ENCODE measurements at regions of chr18 and their contacts with region 1.

Region 1: DNA sequence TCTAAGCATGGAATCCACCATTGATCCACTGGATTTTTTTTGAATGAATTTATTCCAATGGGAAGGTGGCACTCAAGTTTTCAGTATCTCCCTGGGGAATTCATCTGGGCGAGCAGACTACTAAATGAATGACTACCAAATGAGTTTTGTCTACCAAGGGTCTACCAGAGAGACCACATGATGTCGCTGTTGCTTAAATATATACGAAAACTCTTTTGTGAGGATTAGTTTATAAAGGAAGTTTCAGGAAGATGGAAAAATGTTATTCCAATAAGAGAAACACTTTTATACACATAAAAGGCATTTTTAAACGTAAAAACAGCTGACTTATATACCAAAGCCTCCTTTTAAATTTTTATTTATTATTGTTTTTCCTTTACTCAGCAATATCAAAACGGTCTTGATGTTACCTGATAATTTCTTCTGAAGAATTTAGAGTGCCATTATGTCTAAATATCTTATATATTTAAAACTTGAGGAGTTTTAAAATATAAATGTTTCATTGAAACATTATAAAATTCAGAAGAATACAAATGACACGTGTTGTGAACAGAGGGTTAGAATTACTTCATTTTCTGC is 139.7 kb downstream of the HRH4 start:
- DNase-seq: peak in 1 of 2 experiments; percentile 21
- H3K4me3 ChIP-seq: no peak overlapping the region
- H3K4me3 Mint-ChIP-seq: no peak overlapping the region
- H3K27ac Mint-ChIP-seq: no peak overlapping the region
- H3K4me1 ChIP-seq: no peaks in the 10 kb centered on the region
- H3K4me1 Mint-ChIP-seq: no peaks in the 10 kb centered on the region
- H3K27me3 ChIP-seq: no peaks in the 10 kb centered on the region
- H3K27me3 Mint-ChIP-seq: peaks cover 5% of the 10 kb centered on the region
- CTCF ChIP-seq: peak; percentile 29 to 30

Region 2: DNA sequence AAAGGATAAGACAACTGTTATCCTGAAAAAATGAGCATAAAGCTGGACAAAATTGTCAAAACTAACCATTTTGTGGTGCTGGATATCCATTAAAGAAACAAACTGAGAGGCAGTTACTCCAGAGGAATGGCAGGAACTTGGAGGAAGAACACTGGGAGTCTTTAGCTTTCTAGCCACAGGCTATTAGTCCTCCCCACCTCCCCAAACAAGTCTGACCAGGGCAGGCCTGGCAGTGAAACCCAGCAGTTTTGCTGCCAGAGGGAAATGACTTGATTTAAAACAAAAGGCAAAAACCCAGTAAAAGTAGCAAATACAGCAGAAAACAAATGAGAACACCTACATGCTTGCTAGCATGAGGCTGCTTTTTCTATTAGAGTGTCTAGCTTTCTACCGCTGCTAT is 237.4 kb before region 1 on chr18:
- CTCF ChIA-PET with region 1: no interaction called
- POLR2A ChIA-PET with region 1: no interaction called
- intact Hi-C with region 1: no loop called
- DNase-seq: peak; percentile 13 to 38
- H3K4me3 ChIP-seq: no peak overlapping the region
- H3K4me3 Mint-ChIP-seq: no peak overlapping the region
- H3K27ac Mint-ChIP-seq: no peak overlapping the region
- H3K4me1 ChIP-seq: 0 out of 2 replicates have a peak, but pooled peaks cover 5% of the 10 kb centered on the region
- H3K4me1 Mint-ChIP-seq: no peaks in the 10 kb centered on the region
- H3K27me3 ChIP-seq: no peaks in the 10 kb centered on the region
- H3K27me3 Mint-ChIP-seq: no peaks in the 10 kb centered on the region
- CTCF ChIP-seq: no peak

Region 3: GRCh38 chr18:24543805-24544498 is 56.2 kb before region 1 on chr18:
- CTCF ChIA-PET with region 1: no interaction called
- POLR2A ChIA-PET with region 1: no interaction called
- intact Hi-C with region 1: loop called (anchors 2 kb)
- DNase-seq: peak in 1 of 2 experiments; percentile 23
- H3K4me3 ChIP-seq: no peak overlapping the region
- H3K4me3 Mint-ChIP-seq: no peak overlapping the region
- H3K27ac Mint-ChIP-seq: no peak overlapping the region
- H3K4me1 ChIP-seq: no peaks in the 10 kb centered on the region
- H3K4me1 Mint-ChIP-seq: no peaks in the 10 kb centered on the region
- H3K27me3 ChIP-seq: no peaks in the 10 kb centered on the region
- H3K27me3 Mint-ChIP-seq: no peaks in the 10 kb centered on the region
- CTCF ChIP-seq: peak; percentile 20 to 41

Region 4: DNA sequence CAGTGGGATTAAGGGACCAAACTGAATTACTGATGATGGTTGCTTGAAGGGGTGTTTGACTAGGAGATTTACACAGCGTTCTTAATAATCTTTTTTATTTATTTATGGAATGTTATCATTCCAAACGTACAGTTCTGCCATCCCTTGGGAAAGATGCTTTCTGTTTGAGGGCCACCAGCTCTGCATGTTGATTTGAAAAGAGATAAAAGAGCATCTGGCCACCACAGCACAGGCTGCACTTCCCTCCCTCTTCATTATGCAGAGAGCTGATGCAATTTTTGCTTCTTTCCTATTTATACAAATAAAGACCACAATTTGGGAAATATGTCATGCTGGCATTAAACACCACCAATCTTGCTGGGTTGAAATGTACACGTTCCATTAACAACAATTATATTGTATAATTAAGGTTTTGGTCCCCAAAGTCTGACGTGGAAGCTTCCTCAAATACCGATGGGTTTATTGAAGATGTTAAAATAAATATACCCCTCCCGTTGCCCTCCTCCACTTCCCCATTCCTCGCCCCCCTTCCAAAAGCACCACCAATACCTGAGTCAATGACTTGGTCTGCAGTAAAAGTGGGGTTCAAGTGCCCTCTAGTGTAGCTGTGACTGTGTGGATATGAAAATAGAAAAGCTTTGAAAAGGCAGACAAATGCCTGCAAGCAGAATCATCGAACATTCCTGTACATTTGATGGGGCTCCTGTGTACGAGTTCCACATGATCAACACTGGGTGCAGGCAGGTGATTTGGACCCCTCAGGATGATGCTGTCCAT is 72.2 kb after region 1 on chr18:
- CTCF ChIA-PET with region 1: no interaction called
- POLR2A ChIA-PET with region 1: no interaction called
- intact Hi-C with region 1: loop called (anchors 5 kb)
- DNase-seq: no peak
- H3K4me3 ChIP-seq: no peak overlapping the region
- H3K4me3 Mint-ChIP-seq: no peak overlapping the region
- H3K27ac Mint-ChIP-seq: no peak overlapping the region
- H3K4me1 ChIP-seq: no peaks in the 10 kb centered on the region
- H3K4me1 Mint-ChIP-seq: no peaks in the 10 kb centered on the region
- H3K27me3 ChIP-seq: no peaks in the 10 kb centered on the region
- H3K27me3 Mint-ChIP-seq: peaks cover 6% of the 10 kb centered on the region
- CTCF ChIP-seq: no peak

Region 5: GRCh38 chr18:24726727-24727492 is 126.7 kb after region 1 on chr18:
- CTCF ChIA-PET with region 1: interaction called, 3 read pairs
- POLR2A ChIA-PET with region 1: no interaction called
- intact Hi-C with region 1: loop called (anchors 1 kb)
- DNase-seq: peak; percentile 35 to 56
- H3K4me3 ChIP-seq: no peak overlapping the region
- H3K4me3 Mint-ChIP-seq: peak overlapping the region; percentile 69
- H3K27ac Mint-ChIP-seq: no peak overlapping the region
- H3K4me1 ChIP-seq: no peaks in the 10 kb centered on the region
- H3K4me1 Mint-ChIP-seq: peaks cover 6% of the 10 kb centered on the region
- H3K27me3 ChIP-seq: no peaks in the 10 kb centered on the region
- H3K27me3 Mint-ChIP-seq: peaks cover 6% of the 10 kb centered on the region
- CTCF ChIP-seq: peak; percentile 45 to 68

Region 6: DNA sequence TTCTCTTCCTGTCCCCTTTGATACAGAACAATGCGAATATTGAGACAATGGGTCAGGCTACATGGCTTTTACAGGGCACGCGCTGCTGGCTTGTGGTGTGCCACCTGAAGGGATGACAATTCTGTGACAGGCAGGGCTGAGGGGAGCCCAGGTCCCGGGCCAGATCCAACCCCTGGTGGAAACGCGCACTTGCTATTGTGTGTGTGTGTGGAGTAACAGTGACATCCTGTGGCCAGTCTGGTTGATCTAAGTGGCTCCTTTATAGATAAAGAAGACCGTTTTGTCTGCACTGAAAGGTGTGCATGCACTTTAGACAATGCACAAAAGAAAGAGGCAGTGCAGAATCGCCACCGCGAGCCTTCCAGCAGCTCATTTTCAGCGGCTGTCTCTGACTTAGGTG is 133.9 kb after region 1 on chr18:
- CTCF ChIA-PET with region 1: no interaction called
- POLR2A ChIA-PET with region 1: no interaction called
- intact Hi-C with region 1: loop called (anchors 2 kb)
- DNase-seq: peak; percentile 28 to 40
- H3K4me3 ChIP-seq: no peak overlapping the region
- H3K4me3 Mint-ChIP-seq: no peak overlapping the region
- H3K27ac Mint-ChIP-seq: no peak overlapping the region
- H3K4me1 ChIP-seq: no peaks in the 10 kb centered on the region
- H3K4me1 Mint-ChIP-seq: no peaks in the 10 kb centered on the region
- H3K27me3 ChIP-seq: no peaks in the 10 kb centered on the region
- H3K27me3 Mint-ChIP-seq: peaks cover 6% of the 10 kb centered on the region
- CTCF ChIP-seq: peak; percentile 18 to 25

Measured in Caco-2 (cell line).